K562 (cell line): ENCODE measurements at regions of chr10 and their contacts with region 1.

Region 1: GRCh38 chr10:45464958-45465567 is 91.0 kb downstream of the ALOX5 start:
- DNase-seq: peak; percentile 86 to 90 (median 88)
- ATAC-seq: peak; percentile 99
- H3K4me3 ChIP-seq: no peak overlapping the region
- H3K27ac ChIP-seq: no peak overlapping the region
- H3K4me1 ChIP-seq: peaks cover 24 to 32% of the 10 kb centered on the region in 2 experiments
- H3K27me3 ChIP-seq: no peaks in the 10 kb centered on the region
- CTCF ChIP-seq: peak; percentile 95 to 99 (median 97)
- EP300 ChIP-seq: no peak
- POLR2A ChIP-seq: no peak
- RAD21 ChIP-seq: peak; percentile 98 to 99

Region 2: GRCh38 chr10:45008524-45009161 is 456.4 kb before region 1 on chr10:
- CTCF ChIA-PET with region 1: no interaction called
- POLR2A ChIA-PET with region 1: no interaction called
- in situ Hi-C with region 1: loop called (anchors 10 kb)
- intact Hi-C with region 1: loop called (anchors 5 kb)
- DNase-seq: peak; percentile 68 to 87 (median 72)
- ATAC-seq: peak; percentile 95
- H3K4me3 ChIP-seq: no peak overlapping the region
- H3K27ac ChIP-seq: no peak overlapping the region
- H3K4me1 ChIP-seq: 0 out of 5 replicates have a peak, but pooled peaks cover 0 to 2% of the 10 kb centered on the region in 2 experiments
- H3K27me3 ChIP-seq: no peaks in the 10 kb centered on the region
- CTCF ChIP-seq: peak; percentile 90 to 99 (median 93)
- EP300 ChIP-seq: 0 out of 2 replicates have a peak, but pooled peaks have one; percentile 20
- POLR2A ChIP-seq: no peak
- RAD21 ChIP-seq: peak; percentile 93 to 95

Region 3: GRCh38 chr10:45235798-45236231 is 229.2 kb before region 1 on chr10:
- CTCF ChIA-PET with region 1: interaction called, 3 read pairs
- POLR2A ChIA-PET with region 1: no interaction called
- in situ Hi-C with region 1: no loop called
- intact Hi-C with region 1: loop called (anchors 5 kb)
- DNase-seq: no peak
- ATAC-seq: peak; percentile 23
- H3K4me3 ChIP-seq: no peak overlapping the region
- H3K27ac ChIP-seq: no peak overlapping the region
- H3K4me1 ChIP-seq: peaks cover 0 to 3% of the 10 kb centered on the region in 2 experiments; a peak in 2 of 5 replicates
- H3K27me3 ChIP-seq: no peaks in the 10 kb centered on the region
- CTCF ChIP-seq: no peak
- EP300 ChIP-seq: no peak
- POLR2A ChIP-seq: no peak
- RAD21 ChIP-seq: no peak

Region 4: GRCh38 chr10:46030091-46030937 is 565.3 kb after region 1 on chr10 and contains the start of gene NCOA4:
- CTCF ChIA-PET with region 1: no interaction called
- POLR2A ChIA-PET with region 1: no interaction called
- in situ Hi-C with region 1: loop called (anchors 5 kb)
- intact Hi-C with region 1: loop called (anchors 5 kb)
- DNase-seq: peak; percentile 99 to 100 (median 99)
- ATAC-seq: peak; percentile 95
- H3K4me3 ChIP-seq: peak within 1 kb of the TSS; percentile 85
- H3K27ac ChIP-seq: peak within 1 kb of the TSS; percentile 92
- H3K4me1 ChIP-seq: peaks cover 26 to 60% of the 10 kb centered on the region in 2 experiments
- H3K27me3 ChIP-seq: no peaks in the 10 kb centered on the region
- CTCF ChIP-seq: peak; percentile 71 to 96 (median 91)
- EP300 ChIP-seq: no peak
- POLR2A ChIP-seq: peak; percentile 97
- RAD21 ChIP-seq: peak; percentile 34 to 42
- polyA plus RNA-seq, gene NCOA4: 126 to 196 TPM